B cell (primary cell): ENCODE measurements at regions of chr2 and their contacts with region 1.

Region 1: GRCh38 chr2:16650287-16651249 is 15.1 kb downstream of the CYRIA start:
- DNase-seq: peak; percentile 61
- ATAC-seq: peak; percentile 58
- H3K4me3 ChIP-seq: peak overlapping the region in 3 of 5 experiments; percentile 5 to 49 (median 20)
- H3K4me3 Mint-ChIP-seq: peak overlapping the region; percentile 82
- H3K27ac ChIP-seq: peak overlapping the region; percentile 15 to 68
- H3K27ac Mint-ChIP-seq: peak overlapping the region; percentile 89
- H3K4me1 ChIP-seq: peaks cover 80% of the 10 kb centered on the region in 2 donors
- H3K4me1 Mint-ChIP-seq: peaks cover 86% of the 10 kb centered on the region
- H3K27me3 ChIP-seq: no peaks in the 10 kb centered on the region
- H3K27me3 Mint-ChIP-seq: no peaks in the 10 kb centered on the region
- CTCF ChIP-seq: no peak

Region 2: GRCh38 chr2:16665748-16666448 is 15.3 kb after region 1 on chr2 and contains the start of gene CYRIA:
- CTCF ChIA-PET with region 1: interaction called, 27 read pairs
- POLR2A ChIA-PET with region 1: interaction called, 9 read pairs
- intact Hi-C with region 1: loop called (anchors 1 kb)
- DNase-seq: peak; percentile 82
- ATAC-seq: peak; percentile 71
- H3K4me3 ChIP-seq: peak within 1 kb of the TSS; percentile 55 to 97 (median 91)
- H3K4me3 Mint-ChIP-seq: peak within 1 kb of the TSS; percentile 92
- H3K27ac ChIP-seq: peak within 1 kb of the TSS; percentile 72 to 87
- H3K27ac Mint-ChIP-seq: peak within 1 kb of the TSS; percentile 95
- H3K4me1 ChIP-seq: peaks cover 43 to 53% of the 10 kb centered on the region in 2 donors
- H3K4me1 Mint-ChIP-seq: peaks cover 55% of the 10 kb centered on the region
- H3K27me3 ChIP-seq: no peaks in the 10 kb centered on the region
- H3K27me3 Mint-ChIP-seq: no peaks in the 10 kb centered on the region
- CTCF ChIP-seq: no peak
- total RNA-seq, gene CYRIA: 58.8 and 59.0 TPM in 2 replicates

Region 3: DNA sequence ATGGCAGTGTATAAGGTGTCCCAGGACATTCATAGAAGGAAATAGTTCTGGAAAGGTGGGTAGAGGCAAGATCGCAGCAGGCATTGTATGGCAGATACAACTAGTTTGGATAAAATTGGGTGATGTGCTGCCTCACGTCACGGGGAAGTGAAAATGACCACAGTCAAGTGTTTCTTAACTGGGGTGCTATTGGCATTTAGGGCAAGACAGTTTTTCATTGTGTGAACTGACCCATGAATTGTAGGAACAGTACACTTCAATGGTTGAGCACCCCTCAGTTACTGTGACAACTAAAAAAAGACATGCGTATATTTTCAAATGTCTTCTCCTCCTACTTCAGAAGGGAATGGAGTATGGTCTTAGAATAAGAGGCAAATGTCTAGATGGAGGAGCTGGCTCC is 37.4 kb after region 1 on chr2:
- CTCF ChIA-PET with region 1: no interaction called
- POLR2A ChIA-PET with region 1: no interaction called
- intact Hi-C with region 1: loop called (anchors 5 kb)
- DNase-seq: peak; percentile 65
- ATAC-seq: peak; percentile 92
- H3K4me3 ChIP-seq: peak overlapping the region in 1 of 5 experiments; percentile 27
- H3K4me3 Mint-ChIP-seq: peak overlapping the region; percentile 57
- H3K27ac ChIP-seq: peak overlapping the region; percentile 11 to 38
- H3K27ac Mint-ChIP-seq: peak overlapping the region; percentile 60
- H3K4me1 ChIP-seq: peaks cover 13 to 19% of the 10 kb centered on the region in 2 donors
- H3K4me1 Mint-ChIP-seq: peaks cover 33% of the 10 kb centered on the region
- H3K27me3 ChIP-seq: no peaks in the 10 kb centered on the region
- H3K27me3 Mint-ChIP-seq: no peaks in the 10 kb centered on the region
- CTCF ChIP-seq: no peak

Region 4: DNA sequence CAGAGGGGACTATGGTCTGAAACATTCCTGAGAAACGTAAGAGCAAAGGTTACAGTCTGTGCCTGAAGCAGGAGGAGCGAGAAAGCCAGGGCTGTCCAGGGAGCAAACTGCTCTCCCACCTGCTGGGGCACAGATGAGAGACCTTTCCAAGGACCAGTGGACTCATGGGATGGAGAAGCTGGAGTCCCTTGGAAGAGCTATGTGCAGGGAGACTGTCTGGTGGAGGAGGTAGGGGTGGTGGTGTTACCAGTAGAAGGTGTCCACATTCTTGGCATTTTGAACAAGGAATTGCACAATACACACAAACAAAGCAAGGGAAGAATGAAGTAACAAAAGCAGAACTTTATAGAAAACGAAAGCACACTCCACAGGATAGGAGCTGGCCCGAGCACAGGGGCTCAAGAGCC is 112.9 kb after region 1 on chr2:
- CTCF ChIA-PET with region 1: no interaction called
- POLR2A ChIA-PET with region 1: no interaction called
- intact Hi-C with region 1: no loop called
- DNase-seq: no peak
- ATAC-seq: no peak
- H3K4me3 ChIP-seq: peak overlapping the region in 1 of 5 experiments; percentile 1
- H3K4me3 Mint-ChIP-seq: peak overlapping the region; percentile 62
- H3K27ac ChIP-seq: no peak overlapping the region
- H3K27ac Mint-ChIP-seq: no peak overlapping the region
- H3K4me1 ChIP-seq: no peaks in the 10 kb centered on the region
- H3K4me1 Mint-ChIP-seq: peaks cover 8% of the 10 kb centered on the region
- H3K27me3 ChIP-seq: no peaks in the 10 kb centered on the region
- H3K27me3 Mint-ChIP-seq: peaks cover 14% of the 10 kb centered on the region
- CTCF ChIP-seq: no peak

Region 5: GRCh38 chr2:17068021-17068420 is 417.5 kb after region 1 on chr2:
- CTCF ChIA-PET with region 1: no interaction called
- POLR2A ChIA-PET with region 1: no interaction called
- intact Hi-C with region 1: no loop called
- DNase-seq: no peak
- ATAC-seq: no peak
- H3K4me3 ChIP-seq: no peak overlapping the region
- H3K4me3 Mint-ChIP-seq: no peak overlapping the region
- H3K27ac ChIP-seq: no peak overlapping the region
- H3K27ac Mint-ChIP-seq: no peak overlapping the region
- H3K4me1 ChIP-seq: no peaks in the 10 kb centered on the region
- H3K4me1 Mint-ChIP-seq: no peaks in the 10 kb centered on the region
- H3K27me3 ChIP-seq: no peaks in the 10 kb centered on the region
- H3K27me3 Mint-ChIP-seq: no peaks in the 10 kb centered on the region
- CTCF ChIP-seq: no peak